B cell (primary cell): ENCODE measurements at regions of chr10 and their contacts with region 1.

Region 1: DNA sequence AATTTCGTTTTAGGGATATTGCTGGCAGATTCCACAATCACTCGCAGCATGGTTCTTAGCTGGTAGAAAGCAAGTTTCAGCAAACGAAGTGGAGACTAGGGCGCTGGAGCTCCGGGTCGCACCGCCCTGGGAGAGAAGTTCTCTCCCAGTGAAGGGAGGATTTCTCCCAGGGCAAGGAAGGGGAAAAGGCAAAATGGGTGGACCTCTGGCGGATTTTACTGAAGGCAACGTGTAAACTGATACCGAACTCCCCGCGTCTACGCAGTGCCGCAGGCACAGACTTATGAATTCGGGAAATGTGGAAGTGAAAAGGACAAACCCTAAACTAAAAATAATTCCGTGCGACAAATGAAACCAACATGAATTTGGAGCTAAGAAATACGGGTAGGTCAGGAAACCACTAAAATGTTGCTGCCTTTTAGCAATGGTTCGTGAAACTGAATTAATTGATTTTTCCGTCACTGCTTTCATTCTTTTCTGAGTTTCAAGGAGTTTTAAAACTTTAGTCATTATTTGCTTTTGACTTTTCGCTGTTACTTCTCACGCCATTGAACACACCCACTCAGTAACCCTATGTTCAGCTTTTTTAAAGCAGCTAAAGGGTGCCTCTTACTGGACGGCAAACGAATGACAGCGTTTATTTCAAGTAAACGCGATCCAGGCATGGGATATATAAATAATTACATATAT is at the start of gene MYOF:
- DNase-seq: peak; percentile 80
- ATAC-seq: peak; percentile 88
- H3K4me3 ChIP-seq: peak within 1 kb of the TSS; percentile 43 to 92 (median 64)
- H3K4me3 Mint-ChIP-seq: peak within 1 kb of the TSS; percentile 83
- H3K27ac ChIP-seq: no peak within 1 kb of the TSS
- H3K27ac Mint-ChIP-seq: no peak within 1 kb of the TSS
- H3K4me1 ChIP-seq: peaks cover 12 to 14% of the 10 kb centered on the region in 2 donors
- H3K4me1 Mint-ChIP-seq: peaks cover 15% of the 10 kb centered on the region
- H3K27me3 ChIP-seq: peaks cover 0 to 16% (median 0%) of the 10 kb centered on the region in 4 experiments
- H3K27me3 Mint-ChIP-seq: peaks cover 26% of the 10 kb centered on the region
- CTCF ChIP-seq: peak; percentile 82
- total RNA-seq, gene MYOF: 0.07 and 0.24 TPM in 2 replicates

Region 2: GRCh38 chr10:93115661-93116383 is 366.5 kb before region 1 on chr10:
- CTCF ChIA-PET with region 1: interaction called, 9 read pairs
- POLR2A ChIA-PET with region 1: no interaction called
- intact Hi-C with region 1: loop called (anchors 2 kb)
- DNase-seq: peak; percentile 77
- ATAC-seq: peak; percentile 83
- H3K4me3 ChIP-seq: no peak overlapping the region
- H3K4me3 Mint-ChIP-seq: no peak overlapping the region
- H3K27ac ChIP-seq: peak overlapping the region in 1 of 2 donors; percentile 10
- H3K27ac Mint-ChIP-seq: peak overlapping the region; percentile 20
- H3K4me1 ChIP-seq: peaks cover 6 to 12% of the 10 kb centered on the region in 2 donors
- H3K4me1 Mint-ChIP-seq: peaks cover 14% of the 10 kb centered on the region
- H3K27me3 ChIP-seq: peaks cover 0 to 11% (median 4%) of the 10 kb centered on the region in 4 experiments
- H3K27me3 Mint-ChIP-seq: peaks cover 14% of the 10 kb centered on the region
- CTCF ChIP-seq: peak; percentile 20

Region 3: GRCh38 chr10:93363891-93364648 is 118.2 kb before region 1 on chr10:
- CTCF ChIA-PET with region 1: interaction called, 47 read pairs
- POLR2A ChIA-PET with region 1: no interaction called
- intact Hi-C with region 1: no loop called
- DNase-seq: no peak
- ATAC-seq: no peak
- H3K4me3 ChIP-seq: no peak overlapping the region
- H3K4me3 Mint-ChIP-seq: no peak overlapping the region
- H3K27ac ChIP-seq: no peak overlapping the region
- H3K27ac Mint-ChIP-seq: no peak overlapping the region
- H3K4me1 ChIP-seq: no peaks in the 10 kb centered on the region
- H3K4me1 Mint-ChIP-seq: no peaks in the 10 kb centered on the region
- H3K27me3 ChIP-seq: no peaks in the 10 kb centered on the region
- H3K27me3 Mint-ChIP-seq: peaks cover 9% of the 10 kb centered on the region
- CTCF ChIP-seq: no peak

Region 4: DNA sequence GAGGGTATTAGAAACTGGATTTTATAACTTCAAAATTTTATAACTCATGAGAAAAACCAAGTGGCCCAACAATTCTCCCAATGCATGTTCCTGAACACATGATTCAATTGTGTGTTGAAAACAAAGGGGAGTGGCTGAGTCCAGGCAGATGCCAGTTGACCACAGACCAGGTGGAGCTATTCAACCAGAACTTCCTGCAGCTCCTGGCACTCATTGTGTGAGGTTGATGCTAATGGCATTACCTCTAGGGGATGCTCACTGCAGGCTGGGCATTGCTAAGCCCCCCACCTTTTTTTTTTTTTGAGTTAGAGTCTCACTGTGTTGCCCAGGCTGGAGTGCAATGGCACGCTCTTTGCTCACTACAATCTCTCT is 20.5 kb before region 1 on chr10:
- CTCF ChIA-PET with region 1: interaction called, 13 read pairs
- POLR2A ChIA-PET with region 1: no interaction called
- intact Hi-C with region 1: no loop called
- DNase-seq: peak; percentile 14
- ATAC-seq: peak; percentile 43
- H3K4me3 ChIP-seq: no peak overlapping the region
- H3K4me3 Mint-ChIP-seq: no peak overlapping the region
- H3K27ac ChIP-seq: no peak overlapping the region
- H3K27ac Mint-ChIP-seq: no peak overlapping the region
- H3K4me1 ChIP-seq: peaks cover 9 to 17% of the 10 kb centered on the region in 2 donors
- H3K4me1 Mint-ChIP-seq: peaks cover 23% of the 10 kb centered on the region
- H3K27me3 ChIP-seq: peaks cover 0 to 3% (median 0%) of the 10 kb centered on the region in 4 experiments
- H3K27me3 Mint-ChIP-seq: peaks cover 3% of the 10 kb centered on the region
- CTCF ChIP-seq: no peak

Region 5: GRCh38 chr10:93496322-93497041 is 14.2 kb after region 1 on chr10 and contains the start of gene CEP55:
- CTCF ChIA-PET with region 1: interaction called, 9 read pairs
- POLR2A ChIA-PET with region 1: interaction called, 4 read pairs
- intact Hi-C with region 1: loop called (anchors 1 kb)
- DNase-seq: peak; percentile 94
- ATAC-seq: peak; percentile 99
- H3K4me3 ChIP-seq: peak within 1 kb of the TSS; percentile 67 to 97 (median 81)
- H3K4me3 Mint-ChIP-seq: peak within 1 kb of the TSS; percentile 93
- H3K27ac ChIP-seq: peak within 1 kb of the TSS in 1 of 2 donors; percentile 44
- H3K27ac Mint-ChIP-seq: peak within 1 kb of the TSS; percentile 67
- H3K4me1 ChIP-seq: peaks cover 8 to 16% of the 10 kb centered on the region in 2 donors
- H3K4me1 Mint-ChIP-seq: peaks cover 15% of the 10 kb centered on the region
- H3K27me3 ChIP-seq: peaks cover 0 to 4% (median 1%) of the 10 kb centered on the region in 4 experiments
- H3K27me3 Mint-ChIP-seq: peaks cover 8% of the 10 kb centered on the region
- CTCF ChIP-seq: no peak
- total RNA-seq, gene CEP55: 0.19 and 0.27 TPM in 2 replicates

Region 6: GRCh38 chr10:93600446-93601145 is 118.3 kb after region 1 on chr10:
- CTCF ChIA-PET with region 1: no interaction called
- POLR2A ChIA-PET with region 1: no interaction called
- intact Hi-C with region 1: no loop called
- DNase-seq: no peak
- ATAC-seq: no peak
- H3K4me3 ChIP-seq: no peak overlapping the region
- H3K4me3 Mint-ChIP-seq: no peak overlapping the region
- H3K27ac ChIP-seq: no peak overlapping the region
- H3K27ac Mint-ChIP-seq: no peak overlapping the region
- H3K4me1 ChIP-seq: no peaks in the 10 kb centered on the region
- H3K4me1 Mint-ChIP-seq: peaks cover 1% of the 10 kb centered on the region
- H3K27me3 ChIP-seq: peaks cover 0 to 14% (median 7%) of the 10 kb centered on the region in 4 experiments
- H3K27me3 Mint-ChIP-seq: peaks cover 48% of the 10 kb centered on the region
- CTCF ChIP-seq: no peak

Region 7: GRCh38 chr10:93652857-93653256 is 170.6 kb after region 1 on chr10:
- CTCF ChIA-PET with region 1: no interaction called
- POLR2A ChIA-PET with region 1: no interaction called
- intact Hi-C with region 1: no loop called
- DNase-seq: no peak
- ATAC-seq: no peak
- H3K4me3 ChIP-seq: no peak overlapping the region
- H3K4me3 Mint-ChIP-seq: no peak overlapping the region
- H3K27ac ChIP-seq: no peak overlapping the region
- H3K27ac Mint-ChIP-seq: no peak overlapping the region
- H3K4me1 ChIP-seq: no peaks in the 10 kb centered on the region
- H3K4me1 Mint-ChIP-seq: no peaks in the 10 kb centered on the region
- H3K27me3 ChIP-seq: no peaks in the 10 kb centered on the region
- H3K27me3 Mint-ChIP-seq: no peaks in the 10 kb centered on the region
- CTCF ChIP-seq: no peak